Prostate gland (tissue), 2 donors: ENCODE measurements at regions of chr1 and their contacts with region 1.

Region 1: GRCh38 chr1:31296486-31297276 is at the starts of genes SNRNP40 and ZCCHC17:
- DNase-seq: peak; percentile 97
- H3K4me3 ChIP-seq: peak within 1 kb of the TSS; percentile 83 to 94
- H3K27ac ChIP-seq: peak within 1 kb of the TSS; percentile 69 to 81
- H3K4me1 ChIP-seq: peaks cover 7% of the 10 kb centered on the region
- H3K27me3 ChIP-seq: no peaks in the 10 kb centered on the region
- CTCF ChIP-seq: peak in 2 of 4 experiments; percentile 12 to 42
- POLR2A ChIP-seq: peak; percentile 88
- total RNA-seq, gene SNRNP40: 58.7 to 65.4 TPM
- total RNA-seq, gene ZCCHC17: 31.5 to 39.0 TPM

Region 2: DNA sequence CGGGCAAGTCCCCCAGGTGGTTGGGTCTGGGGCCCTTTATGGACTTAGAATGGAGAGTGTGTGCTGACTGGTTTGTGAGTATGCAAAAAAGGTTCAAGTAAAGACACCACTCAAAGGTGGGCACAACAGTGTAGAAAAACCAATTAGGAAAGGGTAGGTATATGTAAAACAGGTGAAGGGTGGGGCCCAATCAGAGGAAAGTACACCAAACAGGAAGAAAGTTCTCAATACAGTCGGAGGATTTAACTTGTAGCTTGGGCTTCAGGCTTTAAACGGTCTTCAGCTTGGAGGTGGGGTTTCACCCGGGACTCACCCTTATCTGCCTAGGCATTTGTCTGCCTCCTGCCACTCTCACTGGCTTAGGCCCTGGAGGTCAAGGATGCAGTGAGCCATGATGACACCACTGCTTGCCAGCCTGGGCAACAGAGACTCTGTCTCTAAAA is 224.4 kb before region 1 on chr1:
- intact Hi-C with region 1: no loop called
- DNase-seq: no peak
- H3K4me3 ChIP-seq: no peak overlapping the region
- H3K27ac ChIP-seq: no peak overlapping the region
- H3K4me1 ChIP-seq: no peaks in the 10 kb centered on the region
- H3K27me3 ChIP-seq: no peaks in the 10 kb centered on the region
- CTCF ChIP-seq: no peak
- POLR2A ChIP-seq: no peak

Region 3: DNA sequence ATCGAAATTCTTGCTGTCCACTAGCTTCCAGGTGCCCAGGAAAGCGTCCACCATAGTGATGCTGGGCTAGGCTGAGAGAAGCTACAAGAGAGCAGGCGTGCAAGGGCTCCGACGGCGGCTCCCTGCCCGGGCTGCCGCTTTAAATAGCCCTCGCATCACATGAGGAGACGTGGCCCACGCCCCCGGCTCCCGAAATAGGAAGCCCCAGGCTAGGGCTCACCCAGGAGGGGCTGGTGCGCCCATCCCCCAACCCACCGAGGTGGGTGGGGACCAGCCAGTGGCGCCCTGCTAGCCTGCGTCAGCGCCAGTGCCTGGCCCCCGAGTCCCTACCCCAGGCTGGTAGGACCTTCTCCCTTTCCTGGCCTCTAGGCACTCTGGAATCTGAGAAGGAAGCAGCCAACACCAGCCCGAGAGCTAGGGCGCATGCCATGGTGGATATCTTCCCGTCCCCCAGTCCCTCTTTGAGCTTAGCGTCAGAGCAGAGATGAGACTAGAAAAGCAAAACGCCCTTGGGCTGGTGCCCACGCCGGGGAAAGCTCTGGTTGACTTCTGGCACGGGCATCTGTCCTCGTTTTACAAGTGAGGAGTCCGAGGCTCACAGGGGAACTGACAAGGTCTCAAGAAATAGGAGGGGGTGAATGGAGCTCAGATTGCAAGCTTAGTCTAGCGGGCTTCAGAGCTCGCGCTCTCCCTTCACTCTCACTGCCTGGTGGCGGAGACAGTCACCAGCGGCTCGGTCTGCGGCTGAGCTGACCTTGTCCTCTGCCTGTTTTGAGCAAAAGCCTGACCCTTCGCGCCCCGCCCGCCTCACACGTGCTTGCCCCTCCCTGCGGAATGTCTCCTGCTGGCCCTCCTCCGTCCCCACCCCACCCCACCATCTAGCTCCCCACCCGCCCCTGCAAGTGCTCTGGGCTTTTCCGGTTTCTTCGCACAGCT is 76.5 kb after region 1 on chr1 and contains the start of gene FABP3:
- intact Hi-C with region 1: loop called (anchors 5 kb)
- DNase-seq: peak; percentile 54
- H3K4me3 ChIP-seq: peak within 1 kb of the TSS; percentile 23 to 30
- H3K27ac ChIP-seq: peak within 1 kb of the TSS; percentile 71 to 78
- H3K4me1 ChIP-seq: peaks cover 4% of the 10 kb centered on the region
- H3K27me3 ChIP-seq: no peaks in the 10 kb centered on the region
- CTCF ChIP-seq: no peak
- POLR2A ChIP-seq: peak; percentile 37
- total RNA-seq, gene FABP3: 25.0 to 54.1 TPM